Activated T-helper 1 cell treated with anti-CD3 and anti-CD28 coated beads, Interleukin-12 subunit alpha, Interleukin-12 subunit beta, Interleukin-2, Interleukin-4 antibody, amounts not matched to agents 30 ng/mL and 10 ng/mL and 1 ng/mL, durations not matched to agents 14 hours and 24 hours and 36 hours (primary cell): ENCODE measurements at regions of chr22 and their contacts with region 1.

Region 1: DNA sequence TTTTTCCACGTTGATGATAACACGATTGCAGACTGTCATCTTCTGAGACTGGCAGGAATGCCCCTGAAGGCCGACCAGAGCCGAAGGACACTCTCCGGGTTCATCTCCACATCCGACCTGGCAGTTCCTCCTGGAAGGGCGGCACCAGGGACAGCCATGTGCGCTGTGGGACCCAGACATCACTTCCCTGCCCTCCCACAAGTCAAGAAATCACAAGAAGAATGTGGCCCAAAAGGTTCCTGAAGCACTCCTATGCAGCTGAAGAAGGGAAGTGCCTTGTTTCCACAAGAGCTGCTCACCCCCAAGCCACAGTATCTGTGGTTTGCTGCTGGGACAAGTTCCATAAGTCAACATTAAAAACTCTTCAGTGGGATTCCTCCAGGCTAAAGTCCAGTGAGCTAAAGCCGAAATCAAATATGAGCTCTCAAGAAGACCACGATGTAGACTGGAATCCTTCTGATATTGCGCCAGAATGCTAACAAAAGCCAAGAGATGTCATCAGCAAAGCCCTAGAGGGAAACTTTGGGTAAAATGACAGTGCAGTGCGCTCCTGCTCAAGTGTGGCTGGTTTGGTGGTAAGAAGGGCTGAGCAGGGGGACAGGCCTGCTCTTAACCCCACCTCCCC is 21.2 kb downstream of the PACSIN2 start:
- DNase-seq: no peak
- H3K4me3 Mint-ChIP-seq: no peak overlapping the region
- H3K27ac Mint-ChIP-seq: no peak overlapping the region
- H3K4me1 Mint-ChIP-seq: peaks cover 14% of the 10 kb centered on the region
- H3K27me3 Mint-ChIP-seq: no peaks in the 10 kb centered on the region

Region 2: GRCh38 chr22:42972649-42973535 is 20.9 kb before region 1 on chr22:
- intact Hi-C with region 1: loop called (anchors 2 kb)
- DNase-seq: no peak
- H3K4me3 Mint-ChIP-seq: no peak overlapping the region
- H3K27ac Mint-ChIP-seq: no peak overlapping the region
- H3K4me1 Mint-ChIP-seq: peaks cover 29% of the 10 kb centered on the region
- H3K27me3 Mint-ChIP-seq: no peaks in the 10 kb centered on the region